A673 (cell line): ENCODE measurements at regions of chr15 and their contacts with region 1.

Region 1: DNA sequence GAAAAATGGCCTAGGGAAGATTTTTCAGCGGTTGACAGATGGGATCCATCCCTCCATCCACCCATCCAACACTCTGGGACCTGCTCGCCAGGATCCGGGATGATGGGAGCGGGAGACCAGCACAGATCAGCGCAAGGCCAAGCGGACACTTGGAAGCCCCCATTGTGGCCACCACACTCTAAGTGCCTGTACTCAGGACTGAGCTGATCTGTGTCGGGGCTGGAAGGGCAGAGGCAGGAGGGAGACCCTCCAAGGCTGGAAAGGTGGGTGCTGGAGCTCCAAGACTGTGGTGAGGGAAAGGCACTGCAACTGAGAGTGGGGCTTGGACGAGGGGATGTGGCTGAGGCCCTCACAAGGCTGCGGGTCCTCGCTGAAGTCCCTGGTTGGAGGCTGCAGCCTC is 91.8 kb upstream of the TRPM1 start:
- DNase-seq: no peak
- H3K4me3 ChIP-seq: no peak overlapping the region
- H3K27ac ChIP-seq: no peak overlapping the region
- H3K4me1 ChIP-seq: no peaks in the 10 kb centered on the region
- H3K27me3 ChIP-seq: no peaks in the 10 kb centered on the region
- CTCF ChIP-seq: no peak

Region 2: DNA sequence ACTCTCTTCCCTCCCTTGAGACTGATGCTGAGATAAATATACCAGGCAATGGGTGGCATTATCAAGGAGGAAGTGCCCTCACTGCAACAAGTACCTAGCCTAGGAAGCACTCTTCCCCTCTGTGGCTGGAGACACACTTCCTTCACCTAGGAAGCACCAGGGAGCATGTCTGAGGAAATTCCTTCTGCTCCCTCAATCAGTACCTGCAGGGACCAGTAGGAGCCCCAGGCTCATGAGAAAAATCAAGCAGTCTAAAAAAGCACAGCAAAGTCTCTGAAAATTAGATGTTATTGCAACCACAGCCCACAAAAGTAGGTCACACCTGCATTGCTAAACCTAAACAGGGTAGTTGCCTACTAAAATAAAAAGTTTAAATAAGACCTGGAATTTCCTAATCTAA is 13.6 kb before region 1 on chr15:
- CTCF ChIA-PET with region 1: no interaction called
- POLR2A ChIA-PET with region 1: interaction called, 12 read pairs
- intact Hi-C with region 1: no loop called
- DNase-seq: no peak
- H3K4me3 ChIP-seq: no peak overlapping the region
- H3K27ac ChIP-seq: no peak overlapping the region
- H3K4me1 ChIP-seq: no peaks in the 10 kb centered on the region
- H3K27me3 ChIP-seq: no peaks in the 10 kb centered on the region
- CTCF ChIP-seq: no peak

Region 3: DNA sequence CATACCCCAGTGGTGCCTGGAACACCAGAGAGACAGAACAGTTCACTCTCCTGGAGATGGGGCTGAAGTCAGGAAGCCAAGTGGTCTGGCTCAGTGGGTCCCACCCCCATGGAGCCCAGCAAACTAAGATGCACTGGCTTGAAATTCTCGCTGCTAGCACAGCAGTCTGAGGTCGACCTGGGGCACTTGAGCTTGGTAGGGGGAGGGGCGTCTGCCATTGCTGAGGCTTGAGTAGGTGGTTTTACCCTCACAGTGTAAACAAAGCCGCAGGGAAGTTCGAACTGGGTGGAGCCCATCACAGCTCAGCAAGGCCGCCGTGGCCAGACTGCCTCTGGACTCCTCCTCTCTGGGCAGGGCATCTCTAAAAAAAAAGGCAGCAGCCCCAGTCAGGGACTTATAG is 405.3 kb after region 1 on chr15:
- CTCF ChIA-PET with region 1: no interaction called
- POLR2A ChIA-PET with region 1: no interaction called
- intact Hi-C with region 1: no loop called
- DNase-seq: no peak
- H3K4me3 ChIP-seq: no peak overlapping the region
- H3K27ac ChIP-seq: no peak overlapping the region
- H3K4me1 ChIP-seq: no peaks in the 10 kb centered on the region
- H3K27me3 ChIP-seq: no peaks in the 10 kb centered on the region
- CTCF ChIP-seq: no peak